Activated CD4-positive, alpha-beta memory T cell treated with anti-CD3 and anti-CD28 coated beads for 36 hours (primary cell): ENCODE measurements at regions of chr11 and their contacts with region 1.

Region 1: DNA sequence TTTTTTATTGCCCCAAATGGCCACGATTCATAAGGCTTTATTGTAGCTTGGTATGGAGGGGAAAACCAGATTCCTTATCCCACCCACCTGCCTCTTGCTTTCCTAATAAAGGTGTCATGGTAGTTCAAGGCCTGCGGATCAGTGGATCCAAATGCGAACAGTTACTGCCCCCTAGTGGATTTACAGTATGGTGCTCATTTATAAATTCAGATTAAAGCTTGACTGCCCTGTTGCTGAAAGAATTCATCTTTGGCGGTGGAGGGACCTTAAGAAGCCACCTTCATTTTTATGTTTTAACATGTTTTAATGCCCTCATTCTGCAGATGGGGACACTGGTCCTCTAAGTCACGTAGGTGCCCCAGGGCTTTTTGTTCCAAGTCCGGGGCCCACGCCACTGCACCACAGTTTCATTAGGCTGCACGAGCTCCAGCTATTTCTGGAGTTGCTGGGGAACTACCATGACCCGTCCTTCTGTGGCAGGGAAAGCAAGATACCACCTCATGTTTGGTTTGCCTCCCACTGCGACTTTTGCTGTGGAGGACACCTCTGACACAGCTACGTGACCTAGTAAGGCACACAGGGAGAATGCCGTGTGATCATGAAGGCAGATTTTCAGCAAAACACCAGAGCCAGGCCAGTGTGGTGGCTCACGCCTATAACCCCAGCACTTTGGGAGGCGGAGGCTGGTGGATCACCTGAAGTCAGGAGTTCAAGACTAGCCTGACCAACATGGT is 15.6 kb upstream of the INCENP start:
- DNase-seq: peak; percentile 34
- H3K4me3 Mint-ChIP-seq: no peak overlapping the region
- H3K27ac Mint-ChIP-seq: no peak overlapping the region
- H3K4me1 Mint-ChIP-seq: peaks cover 17% of the 10 kb centered on the region
- H3K27me3 Mint-ChIP-seq: no peaks in the 10 kb centered on the region

Region 2: GRCh38 chr11:61792310-61793085 is 315.7 kb before region 1 on chr11 and contains the starts of genes FEN1 and TMEM258:
- CTCF ChIA-PET with region 1: interaction called, 67 read pairs
- POLR2A ChIA-PET with region 1: no interaction called
- intact Hi-C with region 1: loop called (anchors 2 kb)
- DNase-seq: peak; percentile 92
- H3K4me3 Mint-ChIP-seq: peak within 1 kb of the TSS; percentile 88
- H3K27ac Mint-ChIP-seq: peak within 1 kb of the TSS; percentile 99
- H3K4me1 Mint-ChIP-seq: peaks cover 47% of the 10 kb centered on the region
- H3K27me3 Mint-ChIP-seq: no peaks in the 10 kb centered on the region
- total RNA-seq, gene FEN1: 108 to 111 TPM
- total RNA-seq, gene TMEM258: 191 to 192 TPM

Region 3: GRCh38 chr11:61881397-61881796 is 226.8 kb before region 1 on chr11:
- CTCF ChIA-PET with region 1: interaction called, 15 read pairs
- POLR2A ChIA-PET with region 1: no interaction called
- intact Hi-C with region 1: no loop called
- DNase-seq: no peak
- H3K4me3 Mint-ChIP-seq: no peak overlapping the region
- H3K27ac Mint-ChIP-seq: no peak overlapping the region
- H3K4me1 Mint-ChIP-seq: no peaks in the 10 kb centered on the region
- H3K27me3 Mint-ChIP-seq: no peaks in the 10 kb centered on the region

Region 4: DNA sequence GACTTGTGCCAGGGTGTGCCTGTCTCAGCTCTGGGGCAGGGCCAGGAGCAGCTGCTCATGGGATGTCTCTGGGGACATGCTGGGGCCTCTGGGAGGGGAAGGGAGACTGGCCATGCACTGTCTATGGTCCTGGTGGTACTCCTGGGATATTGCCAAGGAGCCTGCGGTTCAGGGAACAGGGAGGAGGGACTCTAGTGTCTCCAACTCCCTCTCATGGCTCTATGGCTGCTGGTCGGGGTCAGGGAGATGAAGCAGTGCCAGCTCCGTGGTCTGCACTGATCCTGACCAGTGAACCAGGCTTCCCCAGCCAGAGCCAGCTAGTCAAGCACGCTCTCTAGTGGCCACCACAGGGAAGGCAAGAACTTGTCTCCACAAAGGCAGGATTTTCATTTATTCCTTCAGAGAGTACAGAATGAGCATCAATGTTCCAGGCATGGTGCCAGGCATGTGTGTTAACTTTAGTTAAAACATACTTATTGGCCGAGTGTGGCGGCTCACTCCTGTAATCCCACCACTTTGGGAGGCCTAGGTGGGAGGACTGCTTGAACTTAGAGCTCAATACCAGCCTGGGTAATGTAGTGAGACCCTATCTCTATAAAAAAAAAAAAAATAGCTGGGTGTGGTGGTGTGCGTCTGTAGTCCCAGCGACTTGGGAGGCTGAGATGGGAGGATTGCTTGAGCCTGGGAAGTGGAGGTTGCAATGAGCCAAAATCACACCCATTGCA is 160.5 kb before region 1 on chr11:
- CTCF ChIA-PET with region 1: interaction called, 17 read pairs
- POLR2A ChIA-PET with region 1: no interaction called
- intact Hi-C with region 1: no loop called
- DNase-seq: peak; percentile 80
- H3K4me3 Mint-ChIP-seq: no peak overlapping the region
- H3K27ac Mint-ChIP-seq: no peak overlapping the region
- H3K4me1 Mint-ChIP-seq: no peaks in the 10 kb centered on the region
- H3K27me3 Mint-ChIP-seq: peaks cover 2% of the 10 kb centered on the region